ENCODE measurements at regions of chr12 and their contacts with region 1.

Region 1: GRCh38 chr12:92796650-92797049 is 93.9 kb downstream of the PLEKHG7 start:
- DNase-seq: no peak
- H3K4me3 ChIP-seq: no peak overlapping the region
- H3K27ac ChIP-seq: no peak overlapping the region
- H3K27me3 ChIP-seq: no peaks in the 10 kb centered on the region
- CTCF ChIP-seq: no peak

Region 2: GRCh38 chr12:92784795-92785562 is 11.7 kb before region 1 on chr12:
- CTCF ChIA-PET with region 1: interaction called, 18 read pairs
- POLR2A ChIA-PET with region 1: no interaction called
- DNase-seq: peak; percentile 55
- H3K4me3 ChIP-seq: no peak overlapping the region
- H3K27ac ChIP-seq: peak overlapping the region; percentile 73
- H3K27me3 ChIP-seq: no peaks in the 10 kb centered on the region
- CTCF ChIP-seq: peak; percentile 56

Region 3: DNA sequence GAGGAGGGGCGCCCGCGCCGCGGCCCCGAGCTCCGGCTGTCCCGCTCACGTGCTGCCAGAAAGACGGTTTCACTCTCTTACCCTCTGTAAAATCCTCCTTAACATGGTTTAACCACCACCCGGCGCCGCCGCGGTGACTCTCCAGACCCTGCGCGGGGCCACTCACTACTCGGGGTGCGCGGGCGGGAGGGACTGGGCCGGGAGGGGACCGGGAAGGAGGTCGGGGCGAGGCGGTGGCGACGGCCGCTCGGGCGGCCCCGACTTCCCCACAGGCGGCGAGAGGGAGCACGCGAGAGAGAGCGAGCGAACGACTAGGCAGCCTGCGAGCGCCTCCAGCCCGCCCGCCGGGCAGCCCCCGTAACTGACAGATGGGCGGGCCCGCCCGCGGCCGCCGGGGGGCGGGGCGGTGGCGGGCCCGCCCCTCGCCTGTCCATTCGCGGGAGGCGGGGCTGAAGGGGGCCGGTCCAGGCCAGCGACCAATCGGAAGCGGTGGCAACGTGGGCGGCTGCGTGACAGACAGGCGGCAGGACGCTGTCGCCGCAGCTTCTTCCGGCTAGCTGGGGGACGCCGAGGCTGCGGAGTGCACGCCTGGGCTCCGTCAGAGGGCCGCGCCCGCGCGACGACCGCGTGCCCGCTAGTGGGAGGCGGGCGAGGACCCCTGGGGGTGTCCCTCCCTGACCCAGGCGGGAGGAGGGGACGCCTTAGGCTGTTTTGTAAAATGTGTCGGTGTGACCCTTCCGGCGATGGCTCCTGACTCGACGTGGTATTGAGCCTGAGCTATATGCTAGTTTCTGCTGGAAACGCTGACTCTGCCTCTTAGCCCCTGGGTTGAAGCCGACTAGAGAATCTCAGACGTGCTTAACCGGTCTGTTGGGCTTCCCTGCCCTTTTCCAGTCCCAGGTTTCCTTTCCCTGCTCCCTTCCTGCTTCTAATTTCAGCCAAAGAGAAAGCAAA is 132.6 kb after region 1 on chr12 and contains the start of gene EEA1:
- CTCF ChIA-PET with region 1: no interaction called
- POLR2A ChIA-PET with region 1: interaction called, 10 read pairs
- DNase-seq: peak; percentile 80
- H3K4me3 ChIP-seq: peak within 1 kb of the TSS; percentile 82
- H3K27ac ChIP-seq: peak within 1 kb of the TSS; percentile 86
- H3K27me3 ChIP-seq: no peaks in the 10 kb centered on the region
- CTCF ChIP-seq: no peak
- polyA plus RNA-seq, gene EEA1: 14.0 and 18.4 TPM in 2 replicates